Esophagus squamous epithelium (tissue), 5 donors: ENCODE measurements at regions of chr12 and their contacts with region 1.

Region 1: DNA sequence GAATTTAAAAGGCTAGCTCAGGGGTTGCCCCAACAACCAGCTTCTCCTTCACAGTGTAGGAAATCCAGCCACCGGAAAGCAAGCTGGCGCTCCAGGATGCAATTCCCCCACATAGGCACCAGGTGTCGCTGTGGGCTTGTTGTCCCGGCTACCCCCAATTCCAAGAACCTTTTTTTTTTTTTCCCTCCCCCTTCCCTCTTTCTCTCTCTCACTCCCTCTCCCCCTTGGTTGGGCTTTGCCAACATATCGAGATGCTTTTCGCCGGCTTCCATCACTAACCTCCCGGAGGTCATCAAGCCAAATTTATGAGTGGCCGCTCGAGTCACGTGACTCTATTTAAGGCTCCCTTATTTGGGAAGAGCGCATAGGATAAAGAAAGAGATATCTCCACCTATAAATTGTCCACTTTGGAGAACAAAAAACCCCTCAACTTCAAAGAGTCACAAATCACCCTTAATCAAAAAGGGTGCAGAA is at the start of gene HOXC5:
- DNase-seq: no peak
- H3K4me3 ChIP-seq: peak within 1 kb of the TSS; percentile 33 to 71 (median 53)
- H3K27ac ChIP-seq: peak within 1 kb of the TSS; percentile 55 to 83 (median 71)
- H3K4me1 ChIP-seq: peaks cover 12 to 90% (median 16%) of the 10 kb centered on the region in 3 donors
- H3K27me3 ChIP-seq: peaks cover 0 to 97% (median 13%) of the 10 kb centered on the region in 4 donors
- CTCF ChIP-seq: peak; percentile 86 to 98 (median 92)
- POLR2A ChIP-seq: no peak
- total RNA-seq, gene HOXC5: 0.31 to 1.1 TPM in 2 of 4 donors, not detected in the others

Region 2: GRCh38 chr12:54191550-54192022 is 158.9 kb after region 1 on chr12:
- intact Hi-C with region 1: loop called (anchors 5 kb)
- DNase-seq: no peak
- H3K4me3 ChIP-seq: no peak overlapping the region
- H3K27ac ChIP-seq: no peak overlapping the region
- H3K4me1 ChIP-seq: peaks cover 11 to 50% (median 22%) of the 10 kb centered on the region in 3 donors
- H3K27me3 ChIP-seq: peaks cover 0 to 60% (median 0%) of the 10 kb centered on the region in 4 donors
- CTCF ChIP-seq: peak; percentile 65 to 83 (median 78)
- POLR2A ChIP-seq: no peak